Activated CD4-positive, alpha-beta memory T cell treated with anti-CD3 and anti-CD28 coated beads, Interleukin-2, amount 10 ng/mL, durations not matched to agents 7 days and 5 days (primary cell): ENCODE measurements at regions of chr1 and their contacts with region 1.

Region 1: DNA sequence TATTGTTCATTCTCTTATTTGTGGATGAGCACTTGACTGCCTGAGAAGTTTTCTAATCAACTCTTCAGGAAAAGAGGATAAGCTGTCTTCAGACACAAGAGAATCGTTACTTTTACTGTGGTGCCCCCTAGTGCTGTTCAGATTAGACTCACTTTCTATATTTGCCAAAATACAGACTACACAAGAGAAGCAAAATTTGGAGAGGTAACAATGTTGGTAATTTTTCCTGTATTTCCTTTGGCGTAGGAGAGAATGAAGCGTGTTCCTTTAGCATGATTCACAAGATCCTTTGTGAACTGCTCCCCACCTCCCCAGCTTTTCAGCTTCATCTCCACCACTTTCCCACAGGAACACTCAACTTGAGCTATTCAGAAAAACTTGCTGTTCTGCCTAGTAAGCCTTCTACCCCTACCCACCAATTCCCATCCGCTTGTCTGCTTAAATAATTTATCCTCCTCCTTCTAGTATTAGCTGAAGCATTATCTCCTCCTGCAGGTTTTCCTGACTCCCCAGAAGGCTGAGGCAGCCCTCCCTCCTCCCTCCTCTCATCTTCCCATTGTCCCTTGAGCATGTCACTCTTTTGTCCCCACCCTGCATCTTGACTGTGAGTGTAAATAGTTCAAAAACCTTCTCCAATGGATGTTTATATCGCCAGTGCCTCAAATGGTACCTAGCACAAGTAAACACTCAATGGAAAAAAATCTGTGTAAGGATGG is 4.5 kb downstream of the TNFSF4 start:
- DNase-seq: no peak
- H3K4me3 Mint-ChIP-seq: no peak overlapping the region
- H3K27ac Mint-ChIP-seq: no peak overlapping the region
- H3K4me1 Mint-ChIP-seq: peaks cover 30% of the 10 kb centered on the region
- H3K27me3 Mint-ChIP-seq: peaks cover 26% of the 10 kb centered on the region

Region 2: DNA sequence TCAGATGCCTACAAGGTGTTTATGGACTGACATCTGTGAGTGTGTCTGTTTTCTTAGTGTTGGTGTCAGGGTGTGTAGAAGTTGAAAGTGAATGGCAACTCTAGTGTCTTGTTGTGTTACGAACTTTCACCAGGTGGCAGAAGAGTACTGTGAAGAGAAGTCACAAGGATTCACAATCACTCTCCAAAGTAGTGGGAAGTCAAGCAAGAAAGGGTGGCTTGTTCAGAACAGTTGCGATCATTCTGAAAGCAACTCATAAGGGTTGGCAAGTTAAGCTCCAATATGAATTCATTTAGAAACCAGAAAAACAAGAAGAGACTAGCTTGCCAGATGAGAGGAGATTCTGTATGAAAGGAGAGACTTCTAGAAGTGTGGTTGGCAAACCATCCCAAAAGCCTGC is 457.6 kb before region 1 on chr1:
- CTCF ChIA-PET with region 1: interaction called, 92 read pairs
- POLR2A ChIA-PET with region 1: no interaction called
- DNase-seq: peak; percentile 34
- H3K4me3 Mint-ChIP-seq: no peak overlapping the region
- H3K27ac Mint-ChIP-seq: no peak overlapping the region
- H3K4me1 Mint-ChIP-seq: peaks cover 26% of the 10 kb centered on the region
- H3K27me3 Mint-ChIP-seq: peaks cover 64% of the 10 kb centered on the region